IMR-90 (cell line): ENCODE measurements at regions of chr11 and their contacts with region 1.

Region 1: GRCh38 chr11:20355221-20356219 is 8.0 kb upstream of the HTATIP2 start:
- DNase-seq: peak; percentile 58
- ATAC-seq: peak; percentile 92
- H3K4me3 ChIP-seq: no peak overlapping the region
- H3K27ac ChIP-seq: no peak overlapping the region
- H3K4me1 ChIP-seq: peaks cover 2% of the 10 kb centered on the region; the same call in 1 of the 2 replicates
- H3K27me3 ChIP-seq: peaks cover 15% of the 10 kb centered on the region
- CTCF ChIP-seq: peak; percentile 62
- POLR2A ChIP-seq: no peak
- RAD21 ChIP-seq: peak; percentile 36; the same call in 1 of the 2 replicates

Region 2: DNA sequence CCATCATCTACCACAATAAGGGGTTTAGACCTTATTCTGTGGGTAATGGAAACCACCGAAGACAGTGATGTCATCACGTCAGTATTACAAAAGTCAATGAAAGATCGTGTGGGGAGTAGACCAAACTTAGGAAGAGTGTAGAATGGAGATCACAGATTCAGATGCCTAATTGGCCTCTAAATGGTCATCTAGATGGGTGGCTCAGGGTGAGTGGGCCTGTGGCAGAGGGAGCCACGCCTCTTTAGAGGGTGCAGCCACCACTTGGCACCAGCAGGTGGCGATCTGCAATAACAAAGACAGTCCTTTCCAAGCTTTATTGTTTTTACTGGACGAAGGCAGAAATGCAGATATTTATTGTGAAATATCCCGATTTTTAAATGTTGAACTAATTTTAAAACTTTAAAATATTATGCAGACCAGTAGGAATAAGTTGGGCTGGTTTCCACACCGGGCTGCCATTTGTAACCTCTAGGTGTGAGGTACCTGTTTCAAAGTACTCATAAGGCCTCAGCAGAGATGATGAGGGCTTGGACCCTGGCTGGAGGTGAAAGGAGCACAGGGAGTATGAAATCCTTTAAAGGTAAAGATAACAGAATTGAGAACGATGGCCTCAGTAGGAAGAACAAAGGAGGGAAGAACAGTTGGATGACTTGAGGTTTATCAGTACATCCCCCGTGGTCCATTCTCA is 417.2 kb before region 1 on chr11:
- CTCF ChIA-PET with region 1: interaction called, 4 read pairs
- POLR2A ChIA-PET with region 1: no interaction called
- dilution Hi-C with region 1: no loop called
- in situ Hi-C with region 1: loop called (anchors 25 kb)
- intact Hi-C with region 1: loop called (anchors 5 kb)
- DNase-seq: peak; percentile 54
- ATAC-seq: peak; percentile 71
- H3K4me3 ChIP-seq: no peak overlapping the region
- H3K27ac ChIP-seq: no peak overlapping the region
- H3K4me1 ChIP-seq: peaks cover 11% of the 10 kb centered on the region
- H3K27me3 ChIP-seq: no peaks in the 10 kb centered on the region
- CTCF ChIP-seq: peak; percentile 74
- POLR2A ChIP-seq: no peak
- RAD21 ChIP-seq: peak; percentile 63

Region 3: DNA sequence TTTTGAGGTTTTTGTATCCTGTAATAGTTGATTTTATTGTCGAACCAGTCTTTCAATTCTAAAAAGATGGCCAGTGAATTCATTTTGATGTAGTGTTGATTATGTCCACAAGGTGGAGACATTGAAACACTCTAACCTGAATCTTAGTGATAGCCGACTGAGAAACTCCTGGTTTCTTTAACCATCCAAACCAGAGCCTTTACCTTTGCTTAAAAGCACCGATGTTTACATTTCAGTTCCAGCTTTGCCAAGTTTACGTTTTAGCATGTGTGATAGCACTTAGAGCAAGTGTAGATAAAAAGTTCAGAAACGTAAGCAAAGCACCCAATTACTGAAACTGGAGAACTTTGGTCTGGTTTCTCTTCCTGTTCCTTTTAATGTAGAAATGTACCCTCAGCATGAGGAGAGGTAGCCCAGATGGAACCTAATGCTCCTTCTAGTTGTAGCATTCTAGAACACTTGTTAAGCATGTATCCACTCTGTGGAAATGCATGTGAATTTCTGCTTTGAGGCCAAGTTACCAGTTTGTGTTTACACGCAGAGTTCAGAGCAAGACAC is 403.9 kb before region 1 on chr11:
- CTCF ChIA-PET with region 1: interaction called, 4 read pairs
- POLR2A ChIA-PET with region 1: no interaction called
- dilution Hi-C with region 1: no loop called
- in situ Hi-C with region 1: loop called (anchors 25 kb)
- intact Hi-C with region 1: loop called (anchors 2 kb)
- DNase-seq: peak; percentile 70
- ATAC-seq: peak; percentile 69
- H3K4me3 ChIP-seq: no peak overlapping the region; the same call in 1 of the 2 replicates
- H3K27ac ChIP-seq: no peak overlapping the region
- H3K4me1 ChIP-seq: peaks cover 15% of the 10 kb centered on the region
- H3K27me3 ChIP-seq: no peaks in the 10 kb centered on the region
- CTCF ChIP-seq: peak; percentile 73
- POLR2A ChIP-seq: no peak
- RAD21 ChIP-seq: peak; percentile 75

Region 4: GRCh38 chr11:20321177-20321576 is 34.3 kb before region 1 on chr11:
- CTCF ChIA-PET with region 1: no interaction called
- POLR2A ChIA-PET with region 1: no interaction called
- dilution Hi-C with region 1: no loop called
- in situ Hi-C with region 1: no loop called
- intact Hi-C with region 1: no loop called
- DNase-seq: no peak
- ATAC-seq: no peak
- H3K4me3 ChIP-seq: no peak overlapping the region
- H3K27ac ChIP-seq: no peak overlapping the region
- H3K4me1 ChIP-seq: no peaks in the 10 kb centered on the region
- H3K27me3 ChIP-seq: peaks cover 2% of the 10 kb centered on the region
- CTCF ChIP-seq: no peak
- POLR2A ChIP-seq: no peak
- RAD21 ChIP-seq: no peak

Region 5: DNA sequence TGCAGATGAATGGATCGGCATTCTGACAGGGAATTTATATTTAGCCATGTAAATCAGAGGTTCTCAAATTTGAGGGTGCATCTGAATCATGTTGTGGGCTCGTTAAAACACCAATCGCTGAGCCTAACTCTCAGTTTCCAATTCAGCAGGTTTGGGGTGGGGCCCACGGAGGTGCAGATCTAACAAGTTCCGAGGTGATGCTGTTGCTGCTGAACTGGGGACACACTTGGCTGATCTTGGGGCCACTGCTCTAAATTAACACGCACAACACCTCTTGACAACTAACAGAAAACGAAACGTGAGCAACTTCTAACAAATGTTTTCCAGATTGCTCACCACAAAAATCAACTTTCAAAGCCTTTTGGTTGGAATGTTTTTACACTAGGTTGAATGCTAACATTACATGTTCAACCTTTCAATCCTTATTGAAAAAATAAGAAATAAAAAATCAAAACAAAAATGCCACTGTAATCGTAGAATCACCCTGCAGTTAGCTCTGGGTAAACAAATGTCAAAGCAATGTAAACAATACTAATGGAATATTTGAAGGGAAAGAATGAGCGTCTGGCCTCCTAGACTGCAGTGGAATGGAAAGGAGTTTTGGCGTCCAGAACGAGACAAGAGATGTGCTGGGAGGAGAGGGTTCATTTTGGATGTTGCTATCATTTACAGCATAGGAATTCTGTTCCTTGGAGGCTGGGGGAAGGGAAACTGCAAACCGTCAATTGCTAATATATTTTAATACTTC is 175.6 kb after region 1 on chr11:
- CTCF ChIA-PET with region 1: no interaction called
- POLR2A ChIA-PET with region 1: no interaction called
- dilution Hi-C with region 1: no loop called
- in situ Hi-C with region 1: no loop called
- intact Hi-C with region 1: no loop called
- DNase-seq: no peak
- ATAC-seq: peak; percentile 44
- H3K4me3 ChIP-seq: no peak overlapping the region
- H3K27ac ChIP-seq: no peak overlapping the region
- H3K4me1 ChIP-seq: no peaks in the 10 kb centered on the region
- H3K27me3 ChIP-seq: no peaks in the 10 kb centered on the region
- CTCF ChIP-seq: no peak
- POLR2A ChIP-seq: no peak
- RAD21 ChIP-seq: no peak